ENCODE measurements at regions of chr10 and their contacts with region 1.

Region 1: DNA sequence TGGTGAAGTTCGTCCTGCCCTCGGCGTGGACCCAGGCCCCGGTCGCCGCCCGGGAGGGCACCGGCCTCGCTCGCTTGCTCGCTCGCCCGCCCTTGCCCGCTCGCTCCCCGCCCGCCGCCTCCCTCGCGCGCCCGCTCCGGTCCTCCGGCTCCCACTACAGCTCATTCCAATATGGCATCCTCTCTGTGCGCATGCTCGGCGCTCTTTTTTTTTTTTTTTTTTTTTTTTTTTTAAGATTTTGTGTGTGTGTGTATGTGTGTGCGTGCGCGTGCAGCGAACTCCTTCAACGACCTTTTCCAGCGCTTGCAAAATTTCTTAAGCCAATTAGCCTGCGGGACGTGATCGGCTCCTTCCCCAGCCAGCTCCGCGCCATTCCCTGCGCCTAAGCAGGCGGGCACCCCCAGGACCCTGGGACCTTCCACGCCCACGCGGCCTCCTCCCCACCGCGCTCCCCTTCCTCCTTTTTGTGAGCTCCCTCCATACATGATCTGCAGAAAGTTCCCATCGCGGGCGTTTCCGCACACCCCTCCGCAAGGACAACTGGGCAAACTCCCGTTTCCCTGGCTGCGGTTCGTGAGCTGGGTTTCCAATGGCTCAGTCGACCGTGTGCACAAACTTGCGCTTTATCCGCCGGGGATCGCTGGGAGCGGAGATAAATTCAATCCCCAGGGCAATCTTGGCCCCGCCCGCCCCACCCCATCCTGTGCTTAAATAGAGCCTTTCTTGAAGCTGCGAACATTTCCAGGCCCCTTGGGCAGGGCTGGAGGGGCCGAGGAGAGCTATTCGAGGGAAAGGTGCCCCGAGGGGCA is at the start of gene SFMBT2:
- DNase-seq: peak; percentile 56 to 77 (median 62)
- H3K4me3 ChIP-seq: peak within 1 kb of the TSS; percentile 96
- H3K4me3 Mint-ChIP-seq: peak within 1 kb of the TSS; percentile 96 to 99 (median 98)
- H3K27ac ChIP-seq: peak within 1 kb of the TSS; percentile 84
- H3K27ac Mint-ChIP-seq: peak within 1 kb of the TSS; percentile 62 to 98 (median 92)
- H3K4me1 ChIP-seq: peaks cover 33% of the 10 kb centered on the region
- H3K4me1 Mint-ChIP-seq: peaks cover 33 to 45% (median 33%) of the 10 kb centered on the region in 3 donors
- H3K27me3 ChIP-seq: no peaks in the 10 kb centered on the region
- H3K27me3 Mint-ChIP-seq: peaks cover 0 to 8% of the 10 kb centered on the region in 2 donors
- total RNA-seq, gene SFMBT2: 17.4 to 18.3 TPM

Region 2: DNA sequence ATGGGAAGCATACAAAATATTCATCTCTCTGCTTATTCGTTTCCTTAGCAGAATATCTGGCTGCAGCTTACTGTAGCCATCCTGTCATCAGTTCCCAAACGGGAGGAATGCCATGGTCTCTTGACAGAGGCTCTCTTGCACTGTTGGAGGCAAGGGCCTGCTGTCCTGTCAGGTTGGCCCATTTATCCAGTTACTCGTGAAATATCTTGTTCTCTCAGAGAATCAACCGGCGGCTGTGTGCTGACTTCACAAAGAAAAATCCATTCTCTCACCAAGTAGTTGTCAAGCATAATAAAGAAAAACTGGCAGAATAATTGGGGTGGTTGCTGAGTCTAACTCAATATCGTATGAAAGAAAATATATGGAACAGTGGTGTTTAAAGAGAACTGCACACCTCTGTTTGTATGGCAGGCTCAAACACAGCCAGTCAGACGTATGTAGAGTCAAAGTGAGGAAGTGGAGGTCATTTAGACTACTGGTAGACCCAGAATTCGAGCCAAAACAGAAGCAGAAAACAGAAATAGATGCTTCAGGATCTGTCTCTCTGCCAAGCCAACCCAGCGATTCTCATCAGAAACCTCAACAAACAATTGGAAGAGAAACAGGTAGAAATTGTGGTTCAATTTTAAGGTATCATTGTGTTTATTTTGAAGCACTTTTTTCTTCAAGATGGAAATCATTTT is 481.8 kb before region 1 on chr10:
- CTCF ChIA-PET with region 1: interaction called, 4 read pairs
- POLR2A ChIA-PET with region 1: interaction called, 14 read pairs
- DNase-seq: no peak
- H3K4me3 ChIP-seq: no peak overlapping the region
- H3K4me3 Mint-ChIP-seq: peak overlapping the region in 5 of 7 donors; percentile 12 to 91 (median 59)
- H3K27ac ChIP-seq: no peak overlapping the region
- H3K27ac Mint-ChIP-seq: peak overlapping the region; percentile 17 to 97 (median 70)
- H3K4me1 ChIP-seq: peaks cover 52% of the 10 kb centered on the region
- H3K4me1 Mint-ChIP-seq: peaks cover 55 to 57% (median 57%) of the 10 kb centered on the region in 3 donors
- H3K27me3 ChIP-seq: no peaks in the 10 kb centered on the region
- H3K27me3 Mint-ChIP-seq: no peaks in the 10 kb centered on the region

Region 3: GRCh38 chr10:7121154-7121810 is 289.8 kb before region 1 on chr10:
- CTCF ChIA-PET with region 1: interaction called, 14 read pairs
- POLR2A ChIA-PET with region 1: no interaction called
- DNase-seq: peak; percentile 44 to 88 (median 73)
- H3K4me3 ChIP-seq: no peak overlapping the region
- H3K4me3 Mint-ChIP-seq: peak overlapping the region in 1 of 7 donors; percentile 1
- H3K27ac ChIP-seq: no peak overlapping the region
- H3K27ac Mint-ChIP-seq: peak overlapping the region in 7 of 8 donors; percentile 12 to 88 (median 76)
- H3K4me1 ChIP-seq: peaks cover 7% of the 10 kb centered on the region
- H3K4me1 Mint-ChIP-seq: peaks cover 9 to 14% (median 13%) of the 10 kb centered on the region in 3 donors
- H3K27me3 ChIP-seq: no peaks in the 10 kb centered on the region
- H3K27me3 Mint-ChIP-seq: peaks cover 0 to under 1% of the 10 kb centered on the region in 2 donors

Region 4: GRCh38 chr10:7258948-7259523 is 152.0 kb before region 1 on chr10:
- CTCF ChIA-PET with region 1: interaction called, 7 read pairs
- POLR2A ChIA-PET with region 1: interaction called, 15 read pairs
- DNase-seq: peak; percentile 51 to 88 (median 77)
- H3K4me3 ChIP-seq: peak overlapping the region; percentile 7
- H3K4me3 Mint-ChIP-seq: peak overlapping the region; percentile 11 to 85 (median 70)
- H3K27ac ChIP-seq: no peak overlapping the region
- H3K27ac Mint-ChIP-seq: peak overlapping the region; percentile 75 to 96 (median 91)
- H3K4me1 ChIP-seq: peaks cover 33% of the 10 kb centered on the region
- H3K4me1 Mint-ChIP-seq: peaks cover 54 to 72% (median 57%) of the 10 kb centered on the region in 3 donors
- H3K27me3 ChIP-seq: no peaks in the 10 kb centered on the region
- H3K27me3 Mint-ChIP-seq: peaks cover 0 to 4% of the 10 kb centered on the region in 2 donors

Region 5: GRCh38 chr10:7301006-7301793 is 109.9 kb before region 1 on chr10:
- CTCF ChIA-PET with region 1: no interaction called
- POLR2A ChIA-PET with region 1: no interaction called
- DNase-seq: no peak
- H3K4me3 ChIP-seq: no peak overlapping the region
- H3K4me3 Mint-ChIP-seq: no peak overlapping the region
- H3K27ac ChIP-seq: no peak overlapping the region
- H3K27ac Mint-ChIP-seq: no peak overlapping the region
- H3K4me1 ChIP-seq: peaks cover 24% of the 10 kb centered on the region
- H3K4me1 Mint-ChIP-seq: peaks cover 62 to 98% (median 83%) of the 10 kb centered on the region in 3 donors
- H3K27me3 ChIP-seq: no peaks in the 10 kb centered on the region
- H3K27me3 Mint-ChIP-seq: peaks cover 0 to 2% of the 10 kb centered on the region in 2 donors

Region 6: GRCh38 chr10:7445474-7446185 is 34.6 kb after region 1 on chr10:
- CTCF ChIA-PET with region 1: no interaction called
- POLR2A ChIA-PET with region 1: no interaction called
- DNase-seq: no peak
- H3K4me3 ChIP-seq: no peak overlapping the region
- H3K4me3 Mint-ChIP-seq: peak overlapping the region in 2 of 7 donors; percentile 18 to 22
- H3K27ac ChIP-seq: no peak overlapping the region
- H3K27ac Mint-ChIP-seq: no peak overlapping the region
- H3K4me1 ChIP-seq: no peaks in the 10 kb centered on the region
- H3K4me1 Mint-ChIP-seq: peaks cover 3 to 11% (median 8%) of the 10 kb centered on the region in 3 donors
- H3K27me3 ChIP-seq: no peaks in the 10 kb centered on the region
- H3K27me3 Mint-ChIP-seq: no peaks in the 10 kb centered on the region

Region 7: GRCh38 chr10:7484456-7485243 is 73.6 kb after region 1 on chr10:
- CTCF ChIA-PET with region 1: interaction called, 4 read pairs
- POLR2A ChIA-PET with region 1: interaction called, 18 read pairs
- DNase-seq: peak; percentile 36 to 84 (median 77)
- H3K4me3 ChIP-seq: peak overlapping the region; percentile 57
- H3K4me3 Mint-ChIP-seq: peak overlapping the region; percentile 37 to 82 (median 79)
- H3K27ac ChIP-seq: peak overlapping the region; percentile 52
- H3K27ac Mint-ChIP-seq: peak overlapping the region; percentile 74 to 98 (median 91)
- H3K4me1 ChIP-seq: peaks cover 83% of the 10 kb centered on the region
- H3K4me1 Mint-ChIP-seq: peaks cover 79 to 92% (median 91%) of the 10 kb centered on the region in 3 donors
- H3K27me3 ChIP-seq: no peaks in the 10 kb centered on the region
- H3K27me3 Mint-ChIP-seq: peaks cover 0 to 2% of the 10 kb centered on the region in 2 donors

Region 8: GRCh38 chr10:7642491-7643011 is 231.5 kb after region 1 on chr10:
- CTCF ChIA-PET with region 1: no interaction called
- POLR2A ChIA-PET with region 1: no interaction called
- DNase-seq: no peak
- H3K4me3 ChIP-seq: no peak overlapping the region
- H3K4me3 Mint-ChIP-seq: no peak overlapping the region
- H3K27ac ChIP-seq: no peak overlapping the region
- H3K27ac Mint-ChIP-seq: no peak overlapping the region
- H3K4me1 ChIP-seq: no peaks in the 10 kb centered on the region
- H3K4me1 Mint-ChIP-seq: no peaks in the 10 kb centered on the region
- H3K27me3 ChIP-seq: no peaks in the 10 kb centered on the region
- H3K27me3 Mint-ChIP-seq: peaks cover 22 to 42% of the 10 kb centered on the region in 2 donors

Measured in CD8-positive, alpha-beta memory T cell (primary cell).